ENCODE measurements at regions of chr2 and their contacts with region 1.

Region 1: GRCh38 chr2:68172990-68173700 is 15.5 kb downstream of the PNO1 start:
- DNase-seq: no peak
- H3K4me3 Mint-ChIP-seq: no peak overlapping the region
- H3K27ac Mint-ChIP-seq: peak overlapping the region; percentile 41
- H3K4me1 Mint-ChIP-seq: peaks cover 4% of the 10 kb centered on the region
- H3K27me3 Mint-ChIP-seq: no peaks in the 10 kb centered on the region

Region 2: DNA sequence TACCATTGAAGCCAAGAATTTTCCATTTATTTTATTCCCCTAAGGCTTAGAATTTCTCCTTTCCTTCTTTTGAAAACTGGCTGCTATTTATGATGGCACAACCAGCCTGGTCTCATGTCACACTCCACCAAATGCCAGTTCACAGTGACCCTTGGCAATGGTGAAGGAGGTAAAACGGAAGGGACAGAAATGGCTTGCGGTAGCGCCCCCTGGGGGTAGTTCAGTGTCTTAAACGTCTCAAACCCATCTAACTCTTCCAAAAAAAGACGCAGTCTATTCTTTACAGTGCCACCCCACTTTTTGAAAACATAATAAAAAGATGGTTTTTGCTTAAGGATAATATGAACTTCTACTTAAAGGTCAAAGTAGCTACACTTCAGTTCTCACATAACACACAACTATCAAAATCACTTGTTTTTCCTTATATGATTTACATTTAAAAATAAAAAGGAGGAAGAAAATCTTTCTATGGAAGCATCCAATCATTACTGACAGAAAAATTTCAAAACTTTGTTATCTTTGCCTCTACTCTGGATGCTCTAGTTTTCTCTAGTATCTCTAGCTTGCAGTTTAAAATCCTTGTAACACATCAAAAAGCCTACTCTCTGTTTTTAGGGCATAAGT is 12.5 kb after region 1 on chr2:
- CTCF ChIA-PET with region 1: interaction called, 10 read pairs
- intact Hi-C with region 1: no loop called
- DNase-seq: peak; percentile 67
- H3K4me3 Mint-ChIP-seq: no peak overlapping the region
- H3K27ac Mint-ChIP-seq: no peak overlapping the region
- H3K4me1 Mint-ChIP-seq: peaks cover 32% of the 10 kb centered on the region
- H3K27me3 Mint-ChIP-seq: no peaks in the 10 kb centered on the region

Measured in activated naive CD4-positive, alpha-beta T cell treated with anti-CD3 and anti-CD28 coated beads for 36 hours (primary cell).